WTC11 (cell line): ENCODE measurements at regions of chr4 and their contacts with region 1.

Region 1: DNA sequence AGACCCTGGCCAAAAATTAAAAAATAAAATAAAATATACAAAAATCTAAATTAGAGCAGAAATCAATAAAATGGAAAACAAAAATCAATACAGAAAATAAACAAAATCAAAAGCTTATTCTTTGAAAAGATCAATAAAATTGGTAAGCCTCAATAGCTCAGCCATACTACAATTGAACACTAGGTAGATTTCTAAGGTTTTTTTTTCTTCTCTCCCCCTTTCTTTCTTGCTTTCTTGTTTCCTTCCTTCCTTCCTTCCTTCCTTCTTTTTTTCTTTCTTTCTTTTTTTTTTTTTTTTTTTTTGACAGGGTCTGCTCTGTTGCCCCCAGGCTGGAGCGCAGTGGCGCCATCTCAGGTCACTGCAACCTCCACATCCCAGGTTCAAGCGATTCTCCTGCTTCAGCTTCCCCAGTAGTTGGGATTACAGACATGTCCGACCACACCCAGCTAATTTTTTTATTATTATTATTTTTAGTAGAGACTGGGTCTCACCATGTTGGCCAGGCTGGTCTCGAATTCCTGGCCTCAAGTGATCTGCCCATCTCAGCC is 23.4 kb upstream of the PPP3CA start:
- DNase-seq: peak; percentile 54
- ATAC-seq: peak; percentile 38
- H3K4me3 Mint-ChIP-seq: no peak overlapping the region
- H3K27ac Mint-ChIP-seq: no peak overlapping the region
- H3K4me1 Mint-ChIP-seq: peaks cover 18% of the 10 kb centered on the region
- H3K27me3 Mint-ChIP-seq: no peaks in the 10 kb centered on the region
- CTCF ChIP-seq: no peak

Region 2: GRCh38 chr4:101259876-101260275 is 110.9 kb before region 1 on chr4:
- CTCF ChIA-PET with region 1: no interaction called
- POLR2A ChIA-PET with region 1: no interaction called
- DNase-seq: no peak
- ATAC-seq: no peak
- H3K4me3 Mint-ChIP-seq: no peak overlapping the region
- H3K27ac Mint-ChIP-seq: no peak overlapping the region
- H3K4me1 Mint-ChIP-seq: peaks cover 73% of the 10 kb centered on the region
- H3K27me3 Mint-ChIP-seq: no peaks in the 10 kb centered on the region
- CTCF ChIP-seq: no peak

Region 3: GRCh38 chr4:101356928-101357327 is 13.8 kb before region 1 on chr4:
- CTCF ChIA-PET with region 1: interaction called, 13 read pairs
- POLR2A ChIA-PET with region 1: no interaction called
- DNase-seq: no peak
- ATAC-seq: no peak
- H3K4me3 Mint-ChIP-seq: no peak overlapping the region
- H3K27ac Mint-ChIP-seq: no peak overlapping the region
- H3K4me1 Mint-ChIP-seq: peaks cover 5% of the 10 kb centered on the region; the same call in 1 of the 2 replicates
- H3K27me3 Mint-ChIP-seq: no peaks in the 10 kb centered on the region
- CTCF ChIP-seq: no peak

Region 4: GRCh38 chr4:101400096-101400495 is 29.4 kb after region 1 on chr4:
- CTCF ChIA-PET with region 1: no interaction called
- POLR2A ChIA-PET with region 1: no interaction called
- DNase-seq: no peak
- ATAC-seq: no peak
- H3K4me3 Mint-ChIP-seq: no peak overlapping the region
- H3K27ac Mint-ChIP-seq: no peak overlapping the region
- H3K4me1 Mint-ChIP-seq: no peaks in the 10 kb centered on the region
- H3K27me3 Mint-ChIP-seq: no peaks in the 10 kb centered on the region
- CTCF ChIP-seq: no peak